Natural killer cell (primary cell): ENCODE measurements at regions of chr11 and their contacts with region 1.

Region 1: DNA sequence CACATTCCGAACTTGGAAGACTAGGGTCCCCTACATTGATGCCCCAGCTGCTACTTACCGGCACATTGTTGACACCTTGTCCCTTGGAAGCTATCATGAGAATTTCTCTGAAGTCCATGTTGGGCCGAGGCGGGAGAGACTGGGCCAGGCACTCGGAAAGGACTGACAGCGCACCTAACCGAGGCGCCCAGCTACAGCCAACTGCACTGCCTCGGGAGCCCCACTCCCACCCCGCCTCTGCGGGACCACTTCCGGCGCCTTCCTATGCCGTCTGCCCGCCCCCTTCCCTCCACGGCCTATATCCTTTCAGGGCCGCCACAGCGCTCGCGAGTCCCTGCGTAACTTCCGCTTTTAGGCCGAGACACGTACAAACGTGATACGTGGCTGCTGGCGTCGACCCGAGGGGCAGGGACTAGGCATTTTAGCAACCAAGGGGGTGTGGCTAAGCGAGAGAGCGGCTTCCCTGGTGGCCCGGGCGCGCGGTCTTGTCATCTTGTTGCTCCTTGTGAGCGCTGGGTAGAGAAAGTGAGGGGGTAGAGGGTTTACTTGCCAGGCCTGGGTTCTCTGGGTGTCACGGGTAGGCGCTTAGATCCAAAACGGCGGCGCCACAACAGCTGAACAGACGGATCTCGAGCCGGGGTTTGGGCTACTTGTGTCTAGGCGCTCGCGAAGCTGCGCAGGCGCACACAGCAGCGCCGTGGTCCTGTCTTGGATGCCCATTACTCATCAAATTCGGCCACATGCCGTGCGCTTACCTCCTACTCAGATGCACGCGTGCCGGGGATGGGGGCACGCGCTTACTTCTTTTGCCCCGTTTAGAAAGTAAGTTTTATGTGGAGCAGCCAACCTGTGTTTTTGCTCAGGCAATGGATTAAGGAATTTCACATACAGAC is at the start of gene SPTY2D1:
- DNase-seq: peak; percentile 93 to 99
- ATAC-seq: peak; percentile 93 to 97 (median 94)
- H3K4me3 ChIP-seq: peak within 1 kb of the TSS; percentile 94
- H3K4me3 Mint-ChIP-seq: peak within 1 kb of the TSS; percentile 93
- H3K27ac ChIP-seq: peak within 1 kb of the TSS; percentile 99
- H3K27ac Mint-ChIP-seq: peak within 1 kb of the TSS; percentile 98 to 99
- H3K4me1 ChIP-seq: peaks cover 13% of the 10 kb centered on the region
- H3K4me1 Mint-ChIP-seq: peaks cover 28 to 34% of the 10 kb centered on the region in 2 donors
- H3K27me3 ChIP-seq: no peaks in the 10 kb centered on the region
- H3K27me3 Mint-ChIP-seq: no peaks in the 10 kb centered on the region
- CTCF ChIP-seq: no peak
- total RNA-seq, gene SPTY2D1: 58.6 to 62.5 (median 62.0) TPM

Region 2: DNA sequence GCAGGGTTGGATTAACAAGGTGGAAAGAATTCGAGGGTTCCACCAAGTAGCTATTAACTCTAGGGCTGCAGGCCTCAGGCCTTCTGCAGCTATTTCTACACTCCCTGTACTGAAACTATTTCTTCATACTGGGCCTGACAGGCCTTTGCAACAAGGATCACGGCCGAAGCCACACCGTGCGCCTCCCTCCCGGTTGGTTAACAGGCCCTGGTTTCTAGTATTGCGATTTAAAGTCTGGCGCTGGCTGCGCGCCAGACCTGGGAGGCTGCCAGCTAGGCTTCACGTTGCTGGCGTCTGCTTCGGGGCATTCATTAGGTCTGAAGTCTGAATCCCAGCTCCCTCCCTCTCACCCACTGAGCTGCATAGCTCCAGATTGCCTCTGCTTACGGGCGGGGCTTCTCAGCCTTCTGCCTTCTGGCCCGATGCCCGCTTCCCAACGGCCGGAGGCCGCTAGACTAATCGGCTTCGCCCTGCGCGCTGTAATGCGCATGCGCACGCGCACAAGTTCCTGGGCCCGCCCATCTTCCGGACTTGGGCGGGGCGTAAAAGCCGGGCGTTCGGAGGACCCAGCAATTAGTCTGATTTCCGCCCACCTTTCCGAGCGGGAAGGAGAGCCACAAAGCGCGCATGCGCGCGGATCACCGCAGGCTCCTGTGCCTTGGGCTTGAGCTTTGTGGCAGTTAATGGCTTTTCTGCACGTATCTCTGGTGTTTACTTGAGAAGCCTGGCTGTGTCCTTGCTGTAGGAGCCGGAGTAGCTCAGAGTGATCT is 238.5 kb before region 1 on chr11:
- intact Hi-C with region 1: loop called (anchors 10 kb)
- DNase-seq: peak; percentile 95 to 98
- ATAC-seq: peak; percentile 71 to 84 (median 71)
- H3K4me3 ChIP-seq: peak overlapping the region; percentile 83
- H3K4me3 Mint-ChIP-seq: peak overlapping the region; percentile 98
- H3K27ac ChIP-seq: peak overlapping the region; percentile 78
- H3K27ac Mint-ChIP-seq: peak overlapping the region; percentile 96
- H3K4me1 ChIP-seq: peaks cover 24% of the 10 kb centered on the region
- H3K4me1 Mint-ChIP-seq: peaks cover 32 to 57% of the 10 kb centered on the region in 2 donors
- H3K27me3 ChIP-seq: no peaks in the 10 kb centered on the region
- H3K27me3 Mint-ChIP-seq: no peaks in the 10 kb centered on the region
- CTCF ChIP-seq: no peak

Region 3: GRCh38 chr11:18588297-18589252 is 45.8 kb before region 1 on chr11 and contains the start of gene UEVLD:
- intact Hi-C with region 1: loop called (anchors 1 kb)
- DNase-seq: peak; percentile 72 to 80
- ATAC-seq: peak; percentile 54 to 63 (median 55)
- H3K4me3 ChIP-seq: peak within 1 kb of the TSS; percentile 91
- H3K4me3 Mint-ChIP-seq: no peak within 1 kb of the TSS
- H3K27ac ChIP-seq: peak within 1 kb of the TSS; percentile 96
- H3K27ac Mint-ChIP-seq: no peak within 1 kb of the TSS
- H3K4me1 ChIP-seq: peaks cover 14% of the 10 kb centered on the region
- H3K4me1 Mint-ChIP-seq: peaks cover 0 to 5% of the 10 kb centered on the region in 2 donors
- H3K27me3 ChIP-seq: no peaks in the 10 kb centered on the region
- H3K27me3 Mint-ChIP-seq: no peaks in the 10 kb centered on the region
- CTCF ChIP-seq: no peak
- total RNA-seq, gene UEVLD: 13.6 to 17.8 (median 15.6) TPM

Region 4: GRCh38 chr11:18698341-18699268 is 64.2 kb after region 1 on chr11 and contains the start of gene TMEM86A:
- intact Hi-C with region 1: loop called (anchors 1 kb)
- DNase-seq: peak; percentile 94 to 95
- ATAC-seq: peak; percentile 98
- H3K4me3 ChIP-seq: peak within 1 kb of the TSS; percentile 48
- H3K4me3 Mint-ChIP-seq: peak within 1 kb of the TSS; percentile 88
- H3K27ac ChIP-seq: peak within 1 kb of the TSS; percentile 42
- H3K27ac Mint-ChIP-seq: peak within 1 kb of the TSS; percentile 85 to 87
- H3K4me1 ChIP-seq: peaks cover 18% of the 10 kb centered on the region
- H3K4me1 Mint-ChIP-seq: peaks cover 12 to 32% of the 10 kb centered on the region in 2 donors
- H3K27me3 ChIP-seq: no peaks in the 10 kb centered on the region
- H3K27me3 Mint-ChIP-seq: peaks cover 3 to 5% of the 10 kb centered on the region in 2 donors
- CTCF ChIP-seq: no peak
- total RNA-seq, gene TMEM86A: 3.1 to 9.3 (median 9.0) TPM

Region 5: DNA sequence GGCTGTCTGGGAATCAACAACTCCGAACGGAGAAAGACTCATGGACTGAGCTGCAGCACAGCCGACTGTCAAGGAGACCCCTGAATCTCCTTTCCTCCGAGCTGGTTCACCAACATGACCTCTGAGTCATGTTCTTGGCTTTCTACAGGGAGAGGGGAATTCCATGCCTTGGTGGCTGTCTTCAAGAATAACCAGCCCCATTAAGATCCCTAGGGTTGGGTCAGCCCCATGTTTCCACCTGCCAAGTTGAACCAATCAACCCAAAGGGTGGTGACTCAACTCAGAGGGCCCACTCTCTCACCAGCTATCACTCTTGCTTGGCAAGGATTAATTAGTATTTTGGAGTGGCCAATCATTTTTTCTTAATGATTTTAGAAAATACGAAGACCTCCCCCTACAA is 119.9 kb after region 1 on chr11:
- intact Hi-C with region 1: no loop called
- DNase-seq: no peak
- ATAC-seq: no peak
- H3K4me3 ChIP-seq: no peak overlapping the region
- H3K4me3 Mint-ChIP-seq: no peak overlapping the region
- H3K27ac ChIP-seq: no peak overlapping the region
- H3K27ac Mint-ChIP-seq: no peak overlapping the region
- H3K4me1 ChIP-seq: no peaks in the 10 kb centered on the region
- H3K4me1 Mint-ChIP-seq: no peaks in the 10 kb centered on the region
- H3K27me3 ChIP-seq: no peaks in the 10 kb centered on the region
- H3K27me3 Mint-ChIP-seq: peaks cover 0 to 10% of the 10 kb centered on the region in 2 donors
- CTCF ChIP-seq: no peak